ENCODE measurements at regions of chr21 and their contacts with region 1.

Region 1: GRCh38 chr21:42107881-42108553 is 36.9 kb downstream of the UMODL1 start:
- DNase-seq: peak; percentile 53 to 73 (median 71)
- H3K4me3 ChIP-seq: no peak overlapping the region
- H3K4me3 Mint-ChIP-seq: peak overlapping the region in 6 of 8 donors; percentile 23 to 72 (median 54)
- H3K27ac ChIP-seq: no peak overlapping the region
- H3K27ac Mint-ChIP-seq: peak overlapping the region in 2 of 7 donors; percentile 43 to 62
- H3K4me1 ChIP-seq: peaks cover 12% of the 10 kb centered on the region
- H3K4me1 Mint-ChIP-seq: peaks cover 4 to 9% (median 4%) of the 10 kb centered on the region in 4 donors
- H3K27me3 ChIP-seq: no peaks in the 10 kb centered on the region
- H3K27me3 Mint-ChIP-seq: peaks cover 2% of the 10 kb centered on the region in 2 donors

Region 2: DNA sequence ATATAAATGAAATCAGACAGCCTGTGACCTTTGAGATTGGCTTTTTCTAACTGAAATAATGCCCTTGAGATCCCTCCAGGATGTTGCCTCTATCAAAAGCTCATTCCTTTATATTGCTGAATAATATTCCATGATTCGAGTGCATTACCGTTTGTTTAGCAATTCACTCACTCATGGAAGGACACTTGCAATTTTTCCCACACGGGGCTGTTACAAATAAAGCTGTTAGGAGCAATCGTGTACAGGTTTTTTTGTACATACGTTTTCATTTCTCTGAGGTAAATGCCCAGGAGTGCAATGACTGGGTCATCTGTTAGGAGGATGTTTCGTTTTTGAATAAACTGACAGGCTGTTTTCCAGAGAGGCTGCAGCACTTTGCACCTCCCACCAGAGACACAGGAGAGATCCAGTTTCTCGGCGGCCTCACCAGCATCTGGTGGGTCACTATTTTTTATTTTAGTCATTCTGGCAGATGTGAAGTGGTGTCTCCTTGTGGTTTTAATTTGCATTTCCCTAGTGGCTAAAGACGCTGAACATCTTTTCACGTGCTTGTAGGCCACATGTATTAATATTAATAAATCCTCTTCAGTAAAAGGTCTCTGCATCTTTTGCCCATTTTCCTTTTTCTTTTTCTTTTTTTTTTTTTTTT is 239.8 kb before region 1 on chr21:
- CTCF ChIA-PET with region 1: no interaction called
- POLR2A ChIA-PET with region 1: no interaction called
- intact Hi-C with region 1: no loop called
- DNase-seq: no peak
- H3K4me3 ChIP-seq: no peak overlapping the region
- H3K4me3 Mint-ChIP-seq: no peak overlapping the region
- H3K27ac ChIP-seq: no peak overlapping the region
- H3K27ac Mint-ChIP-seq: no peak overlapping the region
- H3K4me1 ChIP-seq: no peaks in the 10 kb centered on the region
- H3K4me1 Mint-ChIP-seq: peaks cover 16 to 30% (median 18%) of the 10 kb centered on the region in 4 donors
- H3K27me3 ChIP-seq: no peaks in the 10 kb centered on the region
- H3K27me3 Mint-ChIP-seq: no peaks in the 10 kb centered on the region

Region 3: GRCh38 chr21:41879190-41879998 is 228.6 kb before region 1 on chr21 and contains the start of gene PRDM15:
- CTCF ChIA-PET with region 1: interaction called, 18 read pairs
- POLR2A ChIA-PET with region 1: interaction called, 6 read pairs
- intact Hi-C with region 1: loop called (anchors 1 kb)
- DNase-seq: peak; percentile 73 to 81 (median 75)
- H3K4me3 ChIP-seq: peak within 1 kb of the TSS; percentile 60 to 74
- H3K4me3 Mint-ChIP-seq: peak within 1 kb of the TSS; percentile 90 to 93 (median 92)
- H3K27ac ChIP-seq: peak within 1 kb of the TSS; percentile 69
- H3K27ac Mint-ChIP-seq: peak within 1 kb of the TSS; percentile 85 to 97 (median 96)
- H3K4me1 ChIP-seq: peaks cover 26% of the 10 kb centered on the region
- H3K4me1 Mint-ChIP-seq: peaks cover 14 to 37% (median 27%) of the 10 kb centered on the region in 4 donors
- H3K27me3 ChIP-seq: no peaks in the 10 kb centered on the region
- H3K27me3 Mint-ChIP-seq: no peaks in the 10 kb centered on the region
- total RNA-seq, gene PRDM15: 14.2 to 14.3 TPM

Region 4: GRCh38 chr21:41926117-41926806 is 181.8 kb before region 1 on chr21:
- CTCF ChIA-PET with region 1: interaction called, 43 read pairs
- POLR2A ChIA-PET with region 1: interaction called, 8 read pairs
- intact Hi-C with region 1: loop called (anchors 1 kb)
- DNase-seq: peak; percentile 48 to 70 (median 60)
- H3K4me3 ChIP-seq: peak overlapping the region; percentile 45 to 66
- H3K4me3 Mint-ChIP-seq: peak overlapping the region; percentile 93 to 100 (median 96)
- H3K27ac ChIP-seq: peak overlapping the region; percentile 74
- H3K27ac Mint-ChIP-seq: peak overlapping the region; percentile 90 to 100 (median 99)
- H3K4me1 ChIP-seq: peaks cover 37% of the 10 kb centered on the region
- H3K4me1 Mint-ChIP-seq: peaks cover 27 to 48% (median 36%) of the 10 kb centered on the region in 4 donors
- H3K27me3 ChIP-seq: no peaks in the 10 kb centered on the region
- H3K27me3 Mint-ChIP-seq: peaks cover 0 to 2% of the 10 kb centered on the region in 2 donors

Region 5: DNA sequence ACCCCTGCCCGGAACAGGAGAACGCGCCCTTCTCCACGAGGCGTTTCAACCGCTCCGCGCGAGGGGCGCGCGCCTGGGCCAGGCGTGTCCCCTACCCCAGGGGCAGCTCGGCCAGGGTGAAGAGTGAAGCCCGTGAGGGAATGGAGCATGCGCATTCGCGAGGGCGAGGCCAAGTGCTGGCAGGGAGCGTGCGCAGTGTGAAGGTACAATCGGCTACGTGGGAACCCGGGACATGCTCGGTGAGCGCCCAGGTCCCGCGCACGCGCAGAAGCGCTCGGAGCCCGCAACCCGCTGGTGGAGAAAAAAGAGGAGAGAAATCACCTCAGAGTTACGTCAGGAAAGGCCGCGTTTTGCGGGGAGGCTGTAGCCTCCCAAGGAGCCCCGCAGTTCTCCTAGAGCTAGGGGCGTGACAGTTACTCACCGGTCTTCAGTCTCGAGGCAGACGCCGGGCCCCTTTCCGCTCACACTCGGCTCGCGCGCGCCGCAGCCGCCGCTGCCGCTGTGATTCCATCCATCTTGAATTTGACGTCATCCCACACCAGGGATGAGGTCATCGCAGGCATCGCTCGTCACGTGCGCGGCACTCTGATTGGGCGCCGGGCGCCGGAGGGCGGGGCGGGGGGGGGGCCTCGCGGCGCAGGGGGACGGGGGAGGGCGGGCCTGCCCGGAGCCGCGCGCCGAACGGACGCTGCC is 98.0 kb before region 1 on chr21 and contains the start of gene ZBTB21:
- CTCF ChIA-PET with region 1: interaction called, 39 read pairs
- POLR2A ChIA-PET with region 1: interaction called, 29 read pairs
- intact Hi-C with region 1: loop called (anchors 1 kb)
- DNase-seq: peak; percentile 98
- H3K4me3 ChIP-seq: peak within 1 kb of the TSS; percentile 37 to 83
- H3K4me3 Mint-ChIP-seq: peak within 1 kb of the TSS; percentile 96 to 100 (median 98)
- H3K27ac ChIP-seq: peak within 1 kb of the TSS; percentile 91
- H3K27ac Mint-ChIP-seq: peak within 1 kb of the TSS; percentile 100
- H3K4me1 ChIP-seq: peaks cover 19% of the 10 kb centered on the region
- H3K4me1 Mint-ChIP-seq: peaks cover 18 to 52% (median 27%) of the 10 kb centered on the region in 4 donors
- H3K27me3 ChIP-seq: no peaks in the 10 kb centered on the region
- H3K27me3 Mint-ChIP-seq: peaks cover 1 to 5% of the 10 kb centered on the region in 2 donors
- total RNA-seq, gene ZBTB21: 20.4 to 21.7 TPM

Region 6: GRCh38 chr21:42081138-42081537 is 26.9 kb before region 1 on chr21:
- CTCF ChIA-PET with region 1: interaction called, 10 read pairs
- POLR2A ChIA-PET with region 1: no interaction called
- intact Hi-C with region 1: no loop called
- DNase-seq: no peak
- H3K4me3 ChIP-seq: no peak overlapping the region
- H3K4me3 Mint-ChIP-seq: no peak overlapping the region
- H3K27ac ChIP-seq: no peak overlapping the region
- H3K27ac Mint-ChIP-seq: no peak overlapping the region
- H3K4me1 ChIP-seq: no peaks in the 10 kb centered on the region
- H3K4me1 Mint-ChIP-seq: no peaks in the 10 kb centered on the region
- H3K27me3 ChIP-seq: no peaks in the 10 kb centered on the region
- H3K27me3 Mint-ChIP-seq: no peaks in the 10 kb centered on the region

Region 7: DNA sequence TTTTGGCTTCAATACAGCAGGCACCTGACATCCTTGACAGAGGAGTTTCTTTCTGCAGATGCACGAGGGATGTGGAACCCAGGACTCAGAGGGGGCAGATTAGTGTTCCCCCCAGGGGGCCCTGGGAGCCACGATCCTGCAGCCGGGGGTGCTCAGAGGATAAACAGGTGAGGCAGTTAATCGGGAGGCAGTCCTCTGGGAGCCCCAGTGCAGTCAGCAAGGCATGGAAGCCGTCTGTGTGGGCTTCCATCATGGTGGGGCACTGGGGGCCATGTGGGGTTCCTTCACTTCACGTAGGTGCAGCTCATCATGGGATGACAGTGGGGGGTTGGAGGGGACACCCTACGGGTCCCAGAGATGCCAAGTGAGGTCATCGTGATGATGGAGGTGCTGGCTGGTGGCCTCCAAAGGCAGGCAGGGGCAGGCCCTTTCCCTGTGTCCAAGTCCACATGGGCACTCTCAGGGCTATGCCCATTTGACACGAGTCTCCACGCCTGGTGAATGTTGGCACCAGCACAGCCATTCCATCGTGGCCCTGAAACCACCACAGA is 51.6 kb after region 1 on chr21:
- CTCF ChIA-PET with region 1: no interaction called
- POLR2A ChIA-PET with region 1: no interaction called
- intact Hi-C with region 1: no loop called
- DNase-seq: no peak
- H3K4me3 ChIP-seq: no peak overlapping the region
- H3K4me3 Mint-ChIP-seq: no peak overlapping the region
- H3K27ac ChIP-seq: no peak overlapping the region
- H3K27ac Mint-ChIP-seq: no peak overlapping the region
- H3K4me1 ChIP-seq: peaks cover 10% of the 10 kb centered on the region
- H3K4me1 Mint-ChIP-seq: peaks cover 8 to 37% (median 18%) of the 10 kb centered on the region in 4 donors
- H3K27me3 ChIP-seq: no peaks in the 10 kb centered on the region
- H3K27me3 Mint-ChIP-seq: peaks cover 0 to 4% of the 10 kb centered on the region in 2 donors

Region 8: DNA sequence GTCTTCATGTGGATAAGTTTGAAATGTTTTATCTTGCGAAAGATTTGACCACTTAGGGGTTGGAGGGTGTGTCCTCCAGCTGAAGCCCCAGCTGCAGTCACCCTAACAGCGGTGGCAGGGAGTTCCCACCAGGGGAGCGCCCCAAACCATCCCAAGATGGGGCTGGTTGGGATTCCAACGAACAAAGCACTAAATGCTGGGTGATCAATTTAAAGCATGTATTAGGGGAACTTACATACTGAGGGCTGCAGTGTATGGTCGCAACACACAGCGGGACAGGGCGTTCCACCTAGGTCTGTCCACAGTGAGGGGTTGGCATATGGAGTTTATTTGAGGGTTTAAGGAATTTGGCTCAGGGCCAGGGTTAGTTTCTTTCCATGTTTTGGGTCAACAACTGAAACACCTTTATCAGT is 431.9 kb after region 1 on chr21:
- CTCF ChIA-PET with region 1: no interaction called
- POLR2A ChIA-PET with region 1: no interaction called
- intact Hi-C with region 1: no loop called
- DNase-seq: no peak
- H3K4me3 ChIP-seq: no peak overlapping the region
- H3K4me3 Mint-ChIP-seq: no peak overlapping the region
- H3K27ac ChIP-seq: no peak overlapping the region
- H3K27ac Mint-ChIP-seq: peak overlapping the region in 3 of 7 donors; percentile 47 to 58 (median 58)
- H3K4me1 ChIP-seq: peaks cover 3% of the 10 kb centered on the region
- H3K4me1 Mint-ChIP-seq: peaks cover under 1 to 9% (median 4%) of the 10 kb centered on the region in 4 donors
- H3K27me3 ChIP-seq: no peaks in the 10 kb centered on the region
- H3K27me3 Mint-ChIP-seq: no peaks in the 10 kb centered on the region